ENCODE measurements at regions of chr3 and their contacts with region 1.

Region 1: DNA sequence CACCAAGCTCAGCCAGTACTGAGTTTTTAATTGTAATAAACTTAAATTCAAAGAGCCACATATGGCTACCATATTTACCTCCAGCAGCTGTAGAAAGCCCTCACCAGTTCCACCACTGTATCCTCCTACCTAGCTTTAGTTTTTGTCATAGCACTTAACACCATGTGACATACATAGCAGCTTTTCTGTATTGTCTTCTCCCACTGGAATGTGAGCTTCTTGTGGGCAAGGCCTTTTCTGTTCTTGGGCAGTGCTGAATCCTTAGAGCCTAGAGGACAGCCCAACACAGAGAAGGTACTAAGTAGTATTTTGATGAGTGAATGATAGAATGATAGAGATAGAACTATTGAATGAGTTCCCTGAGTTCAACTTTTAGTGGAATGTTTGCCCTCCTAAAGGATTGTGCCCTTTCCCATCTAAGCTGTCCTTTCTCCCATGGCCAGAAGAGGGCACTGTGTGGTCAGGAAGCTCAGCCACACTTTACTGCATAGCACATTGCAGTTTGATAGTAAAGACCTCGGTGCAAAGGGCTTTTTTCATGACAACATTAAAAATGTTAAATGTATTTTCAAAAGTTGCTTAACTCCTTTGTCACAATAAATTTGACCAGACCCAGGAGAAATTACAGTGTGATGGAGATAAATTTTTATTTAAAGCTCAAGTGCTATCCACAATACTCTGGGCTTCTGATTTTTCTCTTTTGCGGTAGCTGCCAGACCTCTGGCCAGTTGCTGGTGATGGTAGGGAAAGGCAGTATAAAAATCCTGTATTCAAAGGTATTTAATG is 115.8 kb downstream of the GHSR start:
- DNase-seq: peak; percentile 4 to 71 (median 53)
- ATAC-seq: peak; percentile 81
- H3K4me3 ChIP-seq: no peak overlapping the region
- H3K4me3 Mint-ChIP-seq: no peak overlapping the region
- H3K27ac ChIP-seq: no peak overlapping the region
- H3K27ac Mint-ChIP-seq: no peak overlapping the region
- H3K4me1 ChIP-seq: no peaks in the 10 kb centered on the region
- H3K4me1 Mint-ChIP-seq: peaks cover 2% of the 10 kb centered on the region
- H3K27me3 ChIP-seq: no peaks in the 10 kb centered on the region
- H3K27me3 Mint-ChIP-seq: no peaks in the 10 kb centered on the region
- CTCF ChIP-seq: peak; percentile 79

Region 2: GRCh38 chr3:172347895-172348680 is 15.6 kb after region 1 on chr3:
- CTCF ChIA-PET with region 1: interaction called, 11 read pairs
- POLR2A ChIA-PET with region 1: no interaction called
- intact Hi-C with region 1: no loop called
- DNase-seq: no peak
- ATAC-seq: no peak
- H3K4me3 ChIP-seq: no peak overlapping the region
- H3K4me3 Mint-ChIP-seq: no peak overlapping the region
- H3K27ac ChIP-seq: no peak overlapping the region
- H3K27ac Mint-ChIP-seq: no peak overlapping the region
- H3K4me1 ChIP-seq: no peaks in the 10 kb centered on the region
- H3K4me1 Mint-ChIP-seq: no peaks in the 10 kb centered on the region
- H3K27me3 ChIP-seq: no peaks in the 10 kb centered on the region
- H3K27me3 Mint-ChIP-seq: no peaks in the 10 kb centered on the region
- CTCF ChIP-seq: no peak

Region 3: GRCh38 chr3:172666873-172667694 is 334.6 kb after region 1 on chr3:
- CTCF ChIA-PET with region 1: interaction called, 7 read pairs
- POLR2A ChIA-PET with region 1: interaction called, 3 read pairs
- intact Hi-C with region 1: loop called (anchors 1 kb)
- DNase-seq: peak; percentile 51 to 80 (median 73)
- ATAC-seq: peak; percentile 91
- H3K4me3 ChIP-seq: no peak overlapping the region
- H3K4me3 Mint-ChIP-seq: no peak overlapping the region
- H3K27ac ChIP-seq: no peak overlapping the region
- H3K27ac Mint-ChIP-seq: no peak overlapping the region
- H3K4me1 ChIP-seq: peaks cover 13% of the 10 kb centered on the region
- H3K4me1 Mint-ChIP-seq: peaks cover 15% of the 10 kb centered on the region
- H3K27me3 ChIP-seq: no peaks in the 10 kb centered on the region
- H3K27me3 Mint-ChIP-seq: no peaks in the 10 kb centered on the region
- CTCF ChIP-seq: peak; percentile 77